ENCODE measurements at regions of chr10 and their contacts with region 1.

Region 1: GRCh38 chr10:60662917-60663614 is 115.2 kb upstream of the CDK1 start:
- DNase-seq: no peak
- H3K4me3 ChIP-seq: no peak overlapping the region
- H3K27ac ChIP-seq: no peak overlapping the region
- H3K4me1 ChIP-seq: no peaks in the 10 kb centered on the region
- H3K27me3 ChIP-seq: no peaks in the 10 kb centered on the region
- CTCF ChIP-seq: no peak
- EP300 ChIP-seq: no peak
- POLR2A ChIP-seq: no peak

Region 2: GRCh38 chr10:60099998-60100747 is 562.9 kb before region 1 on chr10:
- in situ Hi-C with region 1: loop called in 1 of 4 experiments (anchors 25 kb)
- intact Hi-C with region 1: no loop called
- DNase-seq: no peak
- H3K4me3 ChIP-seq: no peak overlapping the region
- H3K27ac ChIP-seq: no peak overlapping the region
- H3K4me1 ChIP-seq: peaks cover 0 to 11% (median 0%) of the 10 kb centered on the region in 4 donors
- H3K27me3 ChIP-seq: no peaks in the 10 kb centered on the region
- CTCF ChIP-seq: peak; percentile 48 to 59 (median 57)
- EP300 ChIP-seq: no peak
- POLR2A ChIP-seq: no peak

Region 3: GRCh38 chr10:60618861-60619260 is 44.2 kb before region 1 on chr10:
- in situ Hi-C with region 1: no loop called
- intact Hi-C with region 1: no loop called
- DNase-seq: no peak
- H3K4me3 ChIP-seq: no peak overlapping the region
- H3K27ac ChIP-seq: no peak overlapping the region
- H3K4me1 ChIP-seq: no peaks in the 10 kb centered on the region
- H3K27me3 ChIP-seq: no peaks in the 10 kb centered on the region
- CTCF ChIP-seq: no peak
- EP300 ChIP-seq: no peak
- POLR2A ChIP-seq: no peak

Region 4: GRCh38 chr10:60757420-60757895 is 94.4 kb after region 1 on chr10:
- in situ Hi-C with region 1: loop called in 1 of 4 experiments (anchors 25 kb)
- intact Hi-C with region 1: no loop called
- DNase-seq: no peak
- H3K4me3 ChIP-seq: no peak overlapping the region
- H3K27ac ChIP-seq: no peak overlapping the region
- H3K4me1 ChIP-seq: no peaks in the 10 kb centered on the region
- H3K27me3 ChIP-seq: no peaks in the 10 kb centered on the region
- CTCF ChIP-seq: no peak
- EP300 ChIP-seq: no peak
- POLR2A ChIP-seq: no peak